ENCODE measurements at regions of chr5 and their contacts with region 1.

Region 1: GRCh38 chr5:95554647-95555548 is at the starts of genes ARSK and SKIC3:
- DNase-seq: peak; percentile 95 to 98 (median 97)
- H3K4me3 ChIP-seq: peak within 1 kb of the TSS; percentile 61 to 84
- H3K4me3 Mint-ChIP-seq: peak within 1 kb of the TSS; percentile 92 to 100 (median 98)
- H3K27ac ChIP-seq: peak within 1 kb of the TSS; percentile 70
- H3K27ac Mint-ChIP-seq: peak within 1 kb of the TSS; percentile 89 to 99 (median 96)
- H3K4me1 ChIP-seq: peaks cover 37% of the 10 kb centered on the region
- H3K4me1 Mint-ChIP-seq: peaks cover 32 to 53% (median 42%) of the 10 kb centered on the region in 4 donors
- H3K27me3 ChIP-seq: no peaks in the 10 kb centered on the region
- H3K27me3 Mint-ChIP-seq: no peaks in the 10 kb centered on the region
- total RNA-seq, gene ARSK: 6.8 to 7.4 TPM
- total RNA-seq, gene SKIC3: 94.6 to 99.9 TPM

Region 2: GRCh38 chr5:94893412-94894135 is 661.3 kb before region 1 on chr5:
- CTCF ChIA-PET with region 1: no interaction called
- POLR2A ChIA-PET with region 1: no interaction called
- intact Hi-C with region 1: no loop called
- DNase-seq: no peak
- H3K4me3 ChIP-seq: no peak overlapping the region
- H3K4me3 Mint-ChIP-seq: no peak overlapping the region
- H3K27ac ChIP-seq: no peak overlapping the region
- H3K27ac Mint-ChIP-seq: peak overlapping the region in 1 of 7 donors; percentile 57
- H3K4me1 ChIP-seq: no peaks in the 10 kb centered on the region
- H3K4me1 Mint-ChIP-seq: no peaks in the 10 kb centered on the region
- H3K27me3 ChIP-seq: no peaks in the 10 kb centered on the region
- H3K27me3 Mint-ChIP-seq: peaks cover 1 to 2% of the 10 kb centered on the region in 2 donors

Region 3: DNA sequence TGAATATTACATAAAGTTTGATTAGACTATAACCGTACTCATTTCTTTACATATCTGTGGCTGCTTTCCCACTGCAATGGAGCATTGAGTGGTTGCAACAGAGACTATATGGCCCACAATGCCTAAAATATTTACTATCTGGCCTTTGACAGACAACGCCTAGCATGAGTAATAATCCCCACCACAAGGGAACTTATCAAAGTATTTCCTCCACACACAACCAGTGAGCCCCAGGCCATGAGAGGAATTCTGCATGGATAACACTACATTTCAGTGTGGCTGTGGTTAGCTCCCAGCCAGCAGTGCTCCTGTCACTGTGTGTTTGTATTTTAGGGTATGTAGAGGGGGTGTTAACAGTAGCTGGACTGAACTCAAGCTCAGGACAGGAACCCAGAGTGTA is 108.9 kb before region 1 on chr5:
- CTCF ChIA-PET with region 1: no interaction called
- POLR2A ChIA-PET with region 1: no interaction called
- intact Hi-C with region 1: no loop called
- DNase-seq: no peak
- H3K4me3 ChIP-seq: no peak overlapping the region
- H3K4me3 Mint-ChIP-seq: no peak overlapping the region
- H3K27ac ChIP-seq: no peak overlapping the region
- H3K27ac Mint-ChIP-seq: no peak overlapping the region
- H3K4me1 ChIP-seq: no peaks in the 10 kb centered on the region
- H3K4me1 Mint-ChIP-seq: no peaks in the 10 kb centered on the region
- H3K27me3 ChIP-seq: no peaks in the 10 kb centered on the region
- H3K27me3 Mint-ChIP-seq: peaks cover 8 to 15% of the 10 kb centered on the region in 2 donors

Region 4: DNA sequence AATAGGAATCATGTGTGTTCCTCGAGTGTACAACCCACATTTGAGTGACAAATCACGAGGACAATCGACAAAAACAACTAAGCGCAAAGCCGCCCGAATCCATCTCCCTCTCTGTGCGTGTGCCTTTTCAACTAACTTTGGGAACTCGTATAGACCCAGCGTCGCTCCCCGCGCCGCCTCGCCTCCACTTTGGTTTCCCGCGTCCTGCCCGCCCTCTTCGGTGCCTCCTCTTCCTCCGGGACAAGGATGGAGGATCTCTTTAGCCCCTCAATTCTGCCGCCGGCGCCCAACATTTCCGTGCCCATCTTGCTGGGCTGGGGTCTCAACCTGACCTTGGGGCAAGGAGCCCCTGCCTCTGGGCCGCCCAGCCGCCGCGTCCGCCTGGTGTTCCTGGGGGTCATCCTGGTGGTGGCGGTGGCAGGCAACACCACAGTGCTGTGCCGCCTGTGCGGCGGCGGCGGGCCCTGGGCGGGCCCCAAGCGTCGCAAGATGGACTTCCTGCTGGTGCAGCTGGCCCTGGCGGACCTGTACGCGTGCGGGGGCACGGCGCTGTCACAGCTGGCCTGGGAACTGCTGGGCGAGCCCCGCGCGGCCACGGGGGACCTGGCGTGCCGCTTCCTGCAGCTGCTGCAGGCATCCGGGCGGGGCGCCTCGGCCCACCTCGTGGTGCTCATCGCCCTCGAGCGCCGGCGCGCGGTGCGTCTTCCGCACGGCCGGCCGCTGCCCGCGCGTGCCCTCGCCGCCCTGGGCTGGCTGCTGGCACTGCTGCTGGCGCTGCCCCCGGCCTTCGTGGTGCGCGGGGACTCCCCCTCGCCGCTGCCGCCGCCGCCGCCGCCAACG is 65.4 kb after region 1 on chr5 and contains the start of gene GPR150:
- CTCF ChIA-PET with region 1: interaction called, 20 read pairs
- POLR2A ChIA-PET with region 1: interaction called, 62 read pairs
- intact Hi-C with region 1: loop called (anchors 1 kb)
- DNase-seq: peak; percentile 58 to 72 (median 64)
- H3K4me3 ChIP-seq: peak within 1 kb of the TSS; percentile 38 to 73
- H3K4me3 Mint-ChIP-seq: peak within 1 kb of the TSS; percentile 90 to 97 (median 94)
- H3K27ac ChIP-seq: peak within 1 kb of the TSS; percentile 69
- H3K27ac Mint-ChIP-seq: peak within 1 kb of the TSS; percentile 23 to 95 (median 86)
- H3K4me1 ChIP-seq: peaks cover 72% of the 10 kb centered on the region
- H3K4me1 Mint-ChIP-seq: peaks cover 57 to 76% (median 67%) of the 10 kb centered on the region in 4 donors
- H3K27me3 ChIP-seq: no peaks in the 10 kb centered on the region
- H3K27me3 Mint-ChIP-seq: no peaks in the 10 kb centered on the region
- total RNA-seq, gene GPR150: 1.5 to 2.4 TPM

Region 5: DNA sequence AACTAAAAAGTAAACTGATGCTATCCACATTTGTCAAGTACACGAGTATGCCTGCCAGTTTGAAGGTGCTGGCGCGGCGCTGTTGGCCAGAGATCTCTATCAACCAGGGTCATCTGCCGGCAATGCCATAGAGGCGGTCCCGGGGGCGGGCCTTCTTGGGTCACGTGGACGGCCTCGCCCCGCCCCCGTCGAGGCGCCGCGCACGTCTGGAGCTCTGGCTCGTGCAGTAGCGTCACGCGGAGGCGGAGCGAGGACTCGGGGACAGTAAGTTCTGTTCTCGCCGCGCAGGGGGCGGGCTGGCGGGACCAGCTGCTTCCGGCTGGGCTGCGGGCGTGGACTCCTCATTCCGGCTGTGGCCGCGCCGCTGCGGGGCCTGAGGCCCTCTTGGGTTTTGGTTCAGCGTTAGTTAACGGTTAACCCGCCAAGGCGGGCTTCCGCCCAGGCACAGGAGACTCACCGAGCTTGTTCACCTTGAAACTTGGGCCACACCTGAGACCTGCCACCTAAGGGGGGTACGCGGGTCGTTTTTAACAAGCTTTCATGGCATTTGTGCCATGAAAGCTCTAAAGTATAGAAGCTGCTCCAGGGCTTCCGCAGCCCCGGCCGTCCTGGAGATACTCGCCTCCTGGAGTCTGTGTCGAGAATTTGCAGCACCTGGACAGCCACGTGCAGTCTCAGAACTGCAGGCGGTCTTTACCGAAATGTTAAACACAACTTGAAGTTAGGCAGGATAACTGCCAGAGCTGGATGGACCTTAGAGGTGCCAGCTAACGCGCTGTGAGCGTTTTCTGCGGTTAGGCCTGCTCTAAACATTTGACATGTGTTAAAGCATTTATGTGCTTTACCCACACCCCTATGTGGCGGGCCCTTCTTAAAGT is 91.9 kb after region 1 on chr5 and contains the start of gene RFESD:
- CTCF ChIA-PET with region 1: interaction called, 4 read pairs
- POLR2A ChIA-PET with region 1: interaction called, 25 read pairs
- intact Hi-C with region 1: loop called (anchors 1 kb)
- DNase-seq: peak; percentile 91 to 95 (median 92)
- H3K4me3 ChIP-seq: peak within 1 kb of the TSS; percentile 71 to 94
- H3K4me3 Mint-ChIP-seq: peak within 1 kb of the TSS; percentile 87 to 93 (median 89)
- H3K27ac ChIP-seq: peak within 1 kb of the TSS; percentile 84
- H3K27ac Mint-ChIP-seq: peak within 1 kb of the TSS; percentile 57 to 94 (median 93)
- H3K4me1 ChIP-seq: peaks cover 31% of the 10 kb centered on the region
- H3K4me1 Mint-ChIP-seq: peaks cover 20 to 42% (median 26%) of the 10 kb centered on the region in 4 donors
- H3K27me3 ChIP-seq: no peaks in the 10 kb centered on the region
- H3K27me3 Mint-ChIP-seq: no peaks in the 10 kb centered on the region
- total RNA-seq, gene RFESD: 9.1 to 9.3 TPM

Region 6: GRCh38 chr5:95822542-95823181 is 267.8 kb after region 1 on chr5 and contains the start of gene GLRX:
- CTCF ChIA-PET with region 1: no interaction called
- POLR2A ChIA-PET with region 1: interaction called, 6 read pairs
- intact Hi-C with region 1: loop called (anchors 1 kb)
- DNase-seq: peak; percentile 56 to 71 (median 64)
- H3K4me3 ChIP-seq: peak within 1 kb of the TSS; percentile 89 to 91
- H3K4me3 Mint-ChIP-seq: peak within 1 kb of the TSS; percentile 98 to 100 (median 99)
- H3K27ac ChIP-seq: peak within 1 kb of the TSS; percentile 79
- H3K27ac Mint-ChIP-seq: peak within 1 kb of the TSS; percentile 76 to 99 (median 97)
- H3K4me1 ChIP-seq: peaks cover 72% of the 10 kb centered on the region
- H3K4me1 Mint-ChIP-seq: peaks cover 55 to 87% (median 60%) of the 10 kb centered on the region in 4 donors
- H3K27me3 ChIP-seq: no peaks in the 10 kb centered on the region
- H3K27me3 Mint-ChIP-seq: no peaks in the 10 kb centered on the region
- total RNA-seq, gene GLRX: 73.9 to 75.9 TPM

Region 7: DNA sequence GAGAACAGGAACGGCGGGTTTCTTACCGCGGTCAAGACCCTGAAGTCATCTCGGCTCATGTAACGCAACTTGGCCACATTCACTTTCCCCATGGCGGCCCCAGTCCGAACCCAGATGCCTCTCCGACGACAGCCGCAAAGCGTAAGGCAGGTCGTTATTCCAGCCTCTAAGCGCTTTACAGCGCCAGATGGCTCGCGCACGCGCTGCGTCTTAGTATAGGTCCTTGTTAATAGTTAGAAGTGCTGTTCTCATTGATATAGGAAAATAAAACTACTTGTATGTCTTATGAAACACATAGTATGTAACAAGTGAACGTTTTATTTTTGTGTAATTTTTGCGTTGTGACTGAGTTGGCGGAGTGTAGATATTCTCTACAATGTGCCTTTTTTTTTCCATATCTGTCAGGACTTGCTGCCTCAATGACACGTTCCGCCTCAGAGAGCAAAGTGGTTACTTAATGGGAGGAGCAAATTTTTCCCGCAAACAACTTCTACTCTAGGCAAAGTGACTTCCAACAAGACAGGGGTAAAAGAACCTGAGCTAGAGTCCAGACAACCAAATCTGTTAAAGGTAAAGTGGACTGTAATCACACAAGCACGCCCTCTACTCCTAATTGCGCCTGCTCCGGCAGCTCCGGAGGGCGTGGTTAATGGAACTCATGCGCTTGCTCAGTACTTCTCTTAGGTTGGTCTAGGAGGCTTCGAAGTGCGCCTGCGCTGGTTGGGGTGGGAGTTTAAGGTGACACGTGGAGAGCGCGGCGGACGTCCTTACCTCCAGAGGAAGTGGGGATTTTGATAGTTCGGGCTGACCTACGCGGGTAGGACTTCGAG is 1628.4 kb after region 1 on chr5 and contains the start of gene RIOK2:
- CTCF ChIA-PET with region 1: no interaction called
- POLR2A ChIA-PET with region 1: no interaction called
- intact Hi-C with region 1: loop called (anchors 1 kb)
- DNase-seq: peak; percentile 91 to 94 (median 92)
- H3K4me3 ChIP-seq: peak within 1 kb of the TSS; percentile 77 to 87
- H3K4me3 Mint-ChIP-seq: peak within 1 kb of the TSS; percentile 94 to 99 (median 97)
- H3K27ac ChIP-seq: peak within 1 kb of the TSS; percentile 95
- H3K27ac Mint-ChIP-seq: peak within 1 kb of the TSS; percentile 99 to 100 (median 100)
- H3K4me1 ChIP-seq: peaks cover 29% of the 10 kb centered on the region
- H3K4me1 Mint-ChIP-seq: peaks cover 23 to 50% (median 38%) of the 10 kb centered on the region in 4 donors
- H3K27me3 ChIP-seq: no peaks in the 10 kb centered on the region
- H3K27me3 Mint-ChIP-seq: no peaks in the 10 kb centered on the region
- total RNA-seq, gene RIOK2: 38.2 to 40.8 TPM